SK-N-SH (cell line): ENCODE measurements at regions of chr11 and their contacts with region 1.

Region 1: GRCh38 chr11:43311791-43312607 is at the start of gene API5:
- DNase-seq: peak; percentile 91
- H3K4me3 ChIP-seq: peak within 1 kb of the TSS; percentile 82 to 97
- H3K27ac ChIP-seq: peak within 1 kb of the TSS; percentile 81 to 83
- H3K4me1 ChIP-seq: peaks cover 9 to 17% of the 10 kb centered on the region in 2 experiments; a peak in 3 of 4 replicates
- H3K27me3 ChIP-seq: no peaks in the 10 kb centered on the region
- CTCF ChIP-seq: peak; percentile 78
- EP300 ChIP-seq: peak in 1 of 2 experiments; percentile 46; a peak in 2 of 4 replicates
- RAD21 ChIP-seq: no peak; the same call in 1 of the 2 replicates
- polyA plus RNA-seq, gene API5: 60.1 and 80.9 TPM in 2 replicates

Region 2: GRCh38 chr11:43327987-43328386 is 16.0 kb after region 1 on chr11:
- CTCF ChIA-PET with region 1: interaction called, 11 read pairs
- POLR2A ChIA-PET with region 1: no interaction called
- DNase-seq: no peak
- H3K4me3 ChIP-seq: no peak overlapping the region
- H3K27ac ChIP-seq: peak overlapping the region in 1 of 2 experiments; percentile 66; a peak in 2 of 4 replicates
- H3K4me1 ChIP-seq: no peaks in the 10 kb centered on the region; a peak in 1 of 4 replicates
- H3K27me3 ChIP-seq: no peaks in the 10 kb centered on the region
- CTCF ChIP-seq: no peak
- EP300 ChIP-seq: no peak
- RAD21 ChIP-seq: no peak

Region 3: GRCh38 chr11:43358801-43359421 is 46.9 kb after region 1 on chr11 and contains the start of gene TTC17:
- CTCF ChIA-PET with region 1: interaction called, 11 read pairs
- POLR2A ChIA-PET with region 1: interaction called, 9 read pairs
- DNase-seq: peak; percentile 96
- H3K4me3 ChIP-seq: peak within 1 kb of the TSS; percentile 97 to 99
- H3K27ac ChIP-seq: peak within 1 kb of the TSS; percentile 75 to 93
- H3K4me1 ChIP-seq: peaks cover 16 to 18% of the 10 kb centered on the region in 2 experiments; a peak in 3 of 4 replicates
- H3K27me3 ChIP-seq: no peaks in the 10 kb centered on the region
- CTCF ChIP-seq: no peak
- EP300 ChIP-seq: no peak
- RAD21 ChIP-seq: no peak
- polyA plus RNA-seq, gene TTC17: 66.0 and 93.2 TPM in 2 replicates

Region 4: GRCh38 chr11:43708776-43709175 is 396.8 kb after region 1 on chr11:
- CTCF ChIA-PET with region 1: no interaction called
- POLR2A ChIA-PET with region 1: no interaction called
- DNase-seq: peak; percentile 30
- H3K4me3 ChIP-seq: no peak overlapping the region
- H3K27ac ChIP-seq: no peak overlapping the region
- H3K4me1 ChIP-seq: no peaks in the 10 kb centered on the region
- H3K27me3 ChIP-seq: no peaks in the 10 kb centered on the region
- CTCF ChIP-seq: peak; percentile 38
- EP300 ChIP-seq: no peak
- RAD21 ChIP-seq: peak; percentile 66